Psoas muscle (tissue), 8 donors: ENCODE measurements at regions of chr18 and their contacts with region 1.

Region 1: DNA sequence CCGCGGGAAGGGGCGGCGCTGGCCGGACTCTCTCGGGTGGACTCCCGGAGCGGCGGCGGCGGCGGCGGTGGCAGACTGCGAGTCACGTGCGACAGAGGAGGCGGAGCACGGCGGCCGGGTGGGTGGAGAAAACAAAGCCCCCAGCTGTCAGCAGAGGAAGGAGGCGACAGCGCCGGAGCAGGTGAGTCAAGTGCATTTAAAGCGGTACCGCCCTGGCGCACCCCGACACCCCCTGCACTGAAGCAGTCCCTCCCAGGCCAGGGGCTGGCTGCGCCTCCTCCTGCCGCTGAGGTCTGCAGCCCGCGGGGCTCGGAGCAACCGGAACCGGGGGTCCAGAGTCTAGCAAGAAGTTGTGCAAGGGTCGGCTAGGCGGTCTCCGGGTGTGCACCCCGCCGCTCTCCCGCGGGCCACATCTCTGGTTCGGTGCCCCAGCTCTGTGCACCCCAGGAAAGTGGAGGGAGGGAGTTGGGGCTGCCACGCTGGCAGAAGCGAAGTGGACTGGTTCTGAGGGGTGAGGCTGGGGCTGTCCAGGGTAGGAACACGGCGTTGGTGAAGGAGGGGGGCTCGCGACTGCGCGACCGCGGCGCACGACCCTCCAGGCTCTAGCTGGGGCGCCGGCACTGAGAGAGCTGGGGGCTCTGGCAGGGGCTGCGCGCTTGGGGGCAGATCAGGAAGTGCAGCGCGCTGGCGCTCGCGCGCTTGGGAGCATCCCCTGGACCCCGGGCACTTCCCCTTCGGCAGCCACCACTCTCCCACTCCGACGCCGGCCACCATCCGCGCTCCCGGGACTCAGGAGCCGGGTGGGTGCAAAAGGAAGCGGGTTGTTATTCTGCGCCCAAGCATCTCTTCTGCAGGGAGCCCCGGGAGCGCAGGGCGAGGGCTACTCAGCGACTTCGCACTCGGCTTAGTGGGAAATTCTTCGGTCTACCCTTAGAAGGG is 64.0 kb upstream of the MAPRE2 start:
- DNase-seq: peak; percentile 87 to 92
- ATAC-seq: peak; percentile 80 to 89 (median 84)
- H3K4me3 ChIP-seq: peak overlapping the region; percentile 95
- H3K27ac ChIP-seq: peak overlapping the region; percentile 99
- H3K4me1 ChIP-seq: peaks cover 42% of the 10 kb centered on the region
- H3K27me3 ChIP-seq: no peaks in the 10 kb centered on the region
- CTCF ChIP-seq: no peak

Region 2: GRCh38 chr18:34787931-34788532 is 189.1 kb before region 1 on chr18:
- intact Hi-C with region 1: no loop called
- DNase-seq: no peak
- ATAC-seq: peak; percentile 75 to 90 (median 81)
- H3K4me3 ChIP-seq: no peak overlapping the region
- H3K27ac ChIP-seq: no peak overlapping the region
- H3K4me1 ChIP-seq: no peaks in the 10 kb centered on the region
- H3K27me3 ChIP-seq: no peaks in the 10 kb centered on the region
- CTCF ChIP-seq: peak; percentile 80

Region 3: GRCh38 chr18:34912010-34912721 is 65.0 kb before region 1 on chr18:
- intact Hi-C with region 1: loop called (anchors 2 to 5 kb)
- DNase-seq: no peak
- ATAC-seq: no peak
- H3K4me3 ChIP-seq: no peak overlapping the region
- H3K27ac ChIP-seq: peak overlapping the region; percentile 91
- H3K4me1 ChIP-seq: peaks cover 45% of the 10 kb centered on the region
- H3K27me3 ChIP-seq: no peaks in the 10 kb centered on the region
- CTCF ChIP-seq: no peak

Region 4: DNA sequence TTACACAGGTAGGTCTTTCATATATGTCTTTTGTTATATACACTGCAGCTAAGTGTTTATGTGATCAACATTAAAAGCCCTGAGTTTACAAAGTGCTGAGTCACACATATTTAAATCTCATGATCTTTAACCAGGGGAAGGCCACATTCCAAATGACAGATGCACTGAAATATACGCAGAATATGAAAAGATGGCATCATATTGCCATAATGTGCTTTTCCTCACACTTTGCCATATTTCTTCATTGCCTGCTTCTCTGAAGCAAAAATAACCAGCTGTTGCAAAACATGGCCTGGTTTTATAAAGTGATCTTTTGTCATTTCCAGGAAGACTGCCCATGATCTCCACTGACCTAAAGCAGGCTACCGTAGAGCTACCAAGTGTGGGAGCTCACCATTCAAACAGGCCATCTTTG is 29.4 kb before region 1 on chr18:
- intact Hi-C with region 1: loop called in 1 of 2 experiments (anchors 5 kb)
- DNase-seq: no peak
- ATAC-seq: peak; percentile 71 to 83 (median 75)
- H3K4me3 ChIP-seq: peak overlapping the region; percentile 12
- H3K27ac ChIP-seq: peak overlapping the region; percentile 77
- H3K4me1 ChIP-seq: peaks cover 13% of the 10 kb centered on the region
- H3K27me3 ChIP-seq: no peaks in the 10 kb centered on the region
- CTCF ChIP-seq: no peak

Region 5: DNA sequence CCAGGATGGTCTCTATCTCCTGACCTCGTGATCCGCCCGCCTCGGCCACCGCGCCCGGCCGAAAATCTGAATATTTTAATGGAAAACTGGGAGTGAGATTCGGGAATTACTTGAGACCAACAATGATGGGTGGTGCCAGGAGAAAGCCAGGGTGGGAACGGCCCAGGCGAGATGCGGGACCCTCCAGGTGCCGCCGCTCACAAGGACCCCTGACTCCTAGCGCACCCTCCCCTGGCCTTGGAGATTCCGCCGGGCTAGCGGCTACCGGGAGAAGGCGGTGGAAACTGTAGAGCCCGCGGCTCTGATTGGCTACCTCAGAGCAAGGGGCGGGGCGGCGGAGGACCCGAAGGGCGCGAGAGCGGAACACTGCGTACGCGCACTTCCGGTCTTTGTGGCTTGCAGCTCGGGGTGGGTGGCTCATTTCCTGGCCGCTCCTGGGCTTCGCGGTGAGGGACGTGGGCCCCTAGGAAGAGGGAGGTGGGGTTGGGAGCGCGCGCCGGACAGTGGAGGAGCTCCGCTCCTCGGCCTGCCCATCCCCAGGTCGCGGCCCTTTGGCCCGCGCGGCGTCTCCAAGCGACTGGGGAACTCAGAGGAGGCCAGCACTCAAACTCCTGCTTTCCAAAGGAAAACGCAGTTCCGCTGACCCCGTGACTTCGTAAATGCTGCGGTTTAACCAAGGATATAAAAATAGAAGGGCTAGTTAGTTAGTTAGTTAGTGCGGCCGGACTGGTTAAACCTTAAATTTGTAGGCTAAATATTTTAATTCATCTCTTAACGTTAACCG is 263.7 kb after region 1 on chr18 and contains the start of gene ZNF397:
- intact Hi-C with region 1: loop called in 1 of 2 experiments (anchors 1 kb)
- DNase-seq: peak; percentile 99
- ATAC-seq: peak; percentile 100
- H3K4me3 ChIP-seq: peak within 1 kb of the TSS; percentile 90
- H3K27ac ChIP-seq: peak within 1 kb of the TSS; percentile 99
- H3K4me1 ChIP-seq: peaks cover 12% of the 10 kb centered on the region
- H3K27me3 ChIP-seq: no peaks in the 10 kb centered on the region
- CTCF ChIP-seq: no peak
- total RNA-seq, gene ZNF397: 13.7 to 25.0 (median 18.7) TPM